ENCODE measurements at regions of chr2 and their contacts with region 1.

Region 1: DNA sequence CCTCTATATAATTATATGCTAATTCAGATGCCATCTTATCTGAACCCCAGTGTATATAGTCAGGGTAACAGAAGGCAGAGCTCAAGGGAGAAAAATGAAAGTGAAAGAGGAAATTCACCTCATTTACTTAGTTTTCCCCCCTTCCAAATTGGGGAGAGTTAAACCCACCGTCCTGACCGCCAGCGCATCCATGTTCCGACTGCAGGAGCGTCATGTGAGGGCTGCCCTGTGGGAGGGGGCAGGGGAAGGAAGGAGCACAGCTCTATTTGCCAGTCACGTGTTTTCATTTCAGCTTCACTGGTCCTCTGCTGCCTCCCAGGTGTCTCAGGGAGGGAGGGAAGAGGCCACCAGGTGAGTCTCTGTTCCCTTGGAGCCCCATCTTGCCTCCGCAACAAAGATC is 13.2 kb downstream of the CNNM4 start:
- DNase-seq: peak in 8 of 9 donors; percentile 35 to 66 (median 54)
- ATAC-seq: peak; percentile 73
- H3K4me3 ChIP-seq: peak overlapping the region; percentile 62
- H3K4me3 Mint-ChIP-seq: peak overlapping the region; percentile 84 to 95 (median 93)
- H3K27ac ChIP-seq: peak overlapping the region; percentile 70
- H3K27ac Mint-ChIP-seq: peak overlapping the region; percentile 88 to 97 (median 93)
- H3K4me1 ChIP-seq: peaks cover 11 to 12% of the 10 kb centered on the region in 2 donors
- H3K4me1 Mint-ChIP-seq: peaks cover 9 to 30% (median 22%) of the 10 kb centered on the region in 7 donors
- H3K27me3 ChIP-seq: no peaks in the 10 kb centered on the region
- H3K27me3 Mint-ChIP-seq: no peaks in the 10 kb centered on the region

Region 2: GRCh38 chr2:96739633-96740428 is 34.1 kb before region 1 on chr2 and contains the start of gene LMAN2L:
- CTCF ChIA-PET with region 1: no interaction called
- POLR2A ChIA-PET with region 1: interaction called, 3 read pairs
- intact Hi-C with region 1: loop called in 1 of 2 experiments (anchors 1 kb)
- DNase-seq: peak; percentile 78 to 99 (median 94)
- ATAC-seq: peak; percentile 100
- H3K4me3 ChIP-seq: peak within 1 kb of the TSS; percentile 70
- H3K4me3 Mint-ChIP-seq: peak within 1 kb of the TSS; percentile 92 to 100 (median 97)
- H3K27ac ChIP-seq: peak within 1 kb of the TSS; percentile 75
- H3K27ac Mint-ChIP-seq: peak within 1 kb of the TSS; percentile 83 to 96 (median 90)
- H3K4me1 ChIP-seq: peaks cover 6% of the 10 kb centered on the region in 2 donors
- H3K4me1 Mint-ChIP-seq: peaks cover 20 to 48% (median 37%) of the 10 kb centered on the region in 7 donors
- H3K27me3 ChIP-seq: no peaks in the 10 kb centered on the region
- H3K27me3 Mint-ChIP-seq: no peaks in the 10 kb centered on the region
- total RNA-seq, gene LMAN2L: 5.0 to 10.9 (median 9.2) TPM

Region 3: GRCh38 chr2:96801005-96801785 is 27.3 kb after region 1 on chr2:
- CTCF ChIA-PET with region 1: interaction called, 3 read pairs
- POLR2A ChIA-PET with region 1: interaction called, 7 read pairs
- intact Hi-C with region 1: loop called in 1 of 2 experiments (anchors 1 kb)
- DNase-seq: peak; percentile 41 to 72 (median 63)
- ATAC-seq: peak; percentile 94
- H3K4me3 ChIP-seq: no peak overlapping the region
- H3K4me3 Mint-ChIP-seq: no peak overlapping the region
- H3K27ac ChIP-seq: no peak overlapping the region
- H3K27ac Mint-ChIP-seq: no peak overlapping the region
- H3K4me1 ChIP-seq: peaks cover 10 to 20% of the 10 kb centered on the region in 2 donors
- H3K4me1 Mint-ChIP-seq: peaks cover under 1 to 4% (median 2%) of the 10 kb centered on the region in 7 donors
- H3K27me3 ChIP-seq: no peaks in the 10 kb centered on the region
- H3K27me3 Mint-ChIP-seq: no peaks in the 10 kb centered on the region

Region 4: GRCh38 chr2:97806738-97807618 is 1033.1 kb after region 1 on chr2:
- CTCF ChIA-PET with region 1: no interaction called
- POLR2A ChIA-PET with region 1: no interaction called
- intact Hi-C with region 1: no loop called
- DNase-seq: peak; percentile 48 to 75 (median 69)
- ATAC-seq: peak; percentile 97
- H3K4me3 ChIP-seq: no peak overlapping the region
- H3K4me3 Mint-ChIP-seq: no peak overlapping the region
- H3K27ac ChIP-seq: no peak overlapping the region
- H3K27ac Mint-ChIP-seq: no peak overlapping the region
- H3K4me1 ChIP-seq: peaks cover 0 to 6% of the 10 kb centered on the region in 2 donors
- H3K4me1 Mint-ChIP-seq: peaks cover 0 to 8% (median 0%) of the 10 kb centered on the region in 7 donors
- H3K27me3 ChIP-seq: no peaks in the 10 kb centered on the region
- H3K27me3 Mint-ChIP-seq: no peaks in the 10 kb centered on the region